GM12878 (cell line): ENCODE measurements at regions of chr4 and their contacts with region 1.

Region 1: DNA sequence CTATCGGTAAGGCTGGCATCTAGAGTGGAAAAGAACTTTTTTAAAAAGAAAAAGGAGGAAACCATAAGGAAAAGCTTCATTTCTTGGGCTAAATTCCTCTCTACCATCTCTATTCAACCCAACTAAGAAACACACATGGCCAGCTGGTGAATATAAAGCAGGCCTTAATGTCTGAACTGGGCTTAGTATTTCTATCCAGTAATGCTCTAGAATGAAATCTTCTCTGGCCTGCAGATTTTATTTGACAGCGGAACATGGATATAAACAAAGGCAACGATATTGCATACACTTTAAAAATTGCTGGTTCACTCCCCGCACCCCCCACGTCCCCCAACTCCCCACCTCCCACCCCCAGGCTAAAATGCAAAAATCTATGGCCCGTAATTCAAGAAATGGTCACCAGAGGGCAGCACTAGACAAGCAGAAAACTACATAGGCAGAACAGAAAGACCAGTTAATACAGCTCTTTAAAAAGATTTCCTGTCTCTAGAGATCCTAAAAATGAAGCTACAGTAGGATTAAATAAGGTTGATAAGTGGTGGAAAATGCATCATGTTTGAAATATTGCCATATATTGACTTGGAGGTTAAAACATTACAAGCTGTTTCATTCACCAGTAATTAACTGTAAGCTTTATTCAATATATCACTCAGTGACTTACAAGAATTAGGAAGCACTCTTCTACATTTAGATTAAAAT is 155.2 kb upstream of the GALNT7 start:
- DNase-seq: peak; percentile 9
- ATAC-seq: peak; percentile 84
- H3K4me3 ChIP-seq: no peak overlapping the region
- H3K27ac ChIP-seq: no peak overlapping the region
- H3K4me1 ChIP-seq: no peaks in the 10 kb centered on the region
- H3K27me3 ChIP-seq: no peaks in the 10 kb centered on the region
- CTCF ChIP-seq: peak; percentile 42 to 65 (median 64); a peak in 5 of 6 replicates
- EP300 ChIP-seq: no peak
- POLR2A ChIP-seq: no peak
- RAD21 ChIP-seq: peak; percentile 94

Region 2: DNA sequence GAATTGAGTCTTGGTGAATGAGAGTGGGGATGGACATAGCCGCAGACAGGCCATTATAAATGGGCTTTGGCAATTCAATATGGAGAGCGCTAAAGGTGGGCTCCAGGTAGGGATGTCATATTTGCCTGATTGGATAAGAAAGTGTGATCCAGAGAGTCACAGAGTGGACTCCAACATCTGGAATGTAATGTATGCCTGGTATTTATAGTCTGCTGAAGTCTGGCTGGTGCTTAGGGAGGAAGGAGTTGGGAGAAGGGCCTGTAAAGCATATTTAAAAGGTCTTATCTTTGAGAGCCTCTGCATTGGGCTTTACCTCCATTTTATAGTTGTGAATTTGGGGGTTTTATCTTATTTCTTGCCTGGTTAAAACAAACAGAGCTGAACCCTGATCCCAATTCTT is 1047.0 kb before region 1 on chr4:
- CTCF ChIA-PET with region 1: no interaction called
- POLR2A ChIA-PET with region 1: no interaction called
- RAD21 ChIA-PET with region 1: no interaction called
- SMC1A ChIA-PET with region 1: no interaction called
- in situ Hi-C with region 1: no loop called
- intact Hi-C with region 1: no loop called
- DNase-seq: no peak
- ATAC-seq: no peak
- H3K4me3 ChIP-seq: no peak overlapping the region
- H3K27ac ChIP-seq: no peak overlapping the region
- H3K4me1 ChIP-seq: no peaks in the 10 kb centered on the region
- H3K27me3 ChIP-seq: no peaks in the 10 kb centered on the region
- CTCF ChIP-seq: no peak
- EP300 ChIP-seq: no peak
- POLR2A ChIP-seq: no peak
- RAD21 ChIP-seq: no peak

Region 3: DNA sequence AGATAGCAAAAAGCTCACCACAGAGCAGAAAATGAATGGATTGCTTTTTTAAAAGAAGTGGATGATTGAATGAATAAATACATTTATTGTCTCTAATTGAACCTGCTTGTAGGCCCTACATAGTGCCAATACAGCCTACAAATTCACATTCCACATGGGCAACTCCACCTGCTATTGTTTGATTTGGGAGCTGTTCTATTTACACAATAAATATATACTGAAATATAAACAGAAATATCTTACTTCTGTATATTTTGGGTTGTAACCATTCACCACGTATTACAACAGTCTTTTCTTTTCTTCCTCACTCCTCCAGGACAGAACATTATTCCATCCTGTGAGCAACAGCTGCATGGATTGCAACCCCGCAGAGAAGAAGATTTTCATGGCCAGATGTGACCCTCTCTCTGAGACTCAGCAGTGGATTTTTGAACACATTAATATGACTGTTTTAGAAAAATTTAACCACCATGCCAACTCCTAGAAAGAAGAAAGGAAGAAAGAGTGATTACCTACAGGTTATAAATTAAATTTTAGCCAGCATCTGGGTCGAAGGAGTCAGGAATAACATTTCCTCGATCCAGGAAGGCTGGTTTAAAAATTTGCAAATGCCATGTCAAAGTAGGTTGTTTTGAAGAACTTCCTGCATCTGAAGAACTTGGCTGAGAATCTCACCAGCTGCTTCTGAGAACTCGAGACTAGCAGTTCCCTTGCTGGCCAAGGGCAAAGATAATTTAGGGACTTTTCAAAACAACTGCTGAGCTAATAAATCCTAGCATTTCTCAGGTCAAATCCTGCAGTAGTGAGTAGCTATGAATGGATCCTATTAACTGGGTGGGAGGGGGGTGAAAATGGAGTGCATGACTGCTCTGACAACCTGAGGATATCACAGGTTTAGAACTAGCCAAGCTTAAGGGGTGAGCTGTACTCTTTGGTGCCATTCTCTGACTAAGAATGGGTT is 26.5 kb after region 1 on chr4:
- CTCF ChIA-PET with region 1: interaction called, 18 read pairs
- POLR2A ChIA-PET with region 1: no interaction called
- RAD21 ChIA-PET with region 1: interaction called, 6 read pairs
- SMC1A ChIA-PET with region 1: interaction called, 3 read pairs
- in situ Hi-C with region 1: no loop called
- intact Hi-C with region 1: no loop called
- DNase-seq: no peak
- ATAC-seq: no peak
- H3K4me3 ChIP-seq: no peak overlapping the region
- H3K27ac ChIP-seq: no peak overlapping the region
- H3K4me1 ChIP-seq: no peaks in the 10 kb centered on the region
- H3K27me3 ChIP-seq: no peaks in the 10 kb centered on the region
- CTCF ChIP-seq: no peak
- EP300 ChIP-seq: no peak
- POLR2A ChIP-seq: no peak
- RAD21 ChIP-seq: no peak

Region 4: GRCh38 chr4:173252024-173252935 is 238.9 kb after region 1 on chr4:
- CTCF ChIA-PET with region 1: interaction called, 175 read pairs
- POLR2A ChIA-PET with region 1: interaction called, 3 read pairs
- RAD21 ChIA-PET with region 1: interaction called, 98 read pairs
- SMC1A ChIA-PET with region 1: interaction called, 96 read pairs
- in situ Hi-C with region 1: loop called (anchors 5 kb)
- intact Hi-C with region 1: loop called (anchors 1 kb)
- DNase-seq: peak; percentile 68
- ATAC-seq: peak; percentile 51
- H3K4me3 ChIP-seq: no peak overlapping the region
- H3K27ac ChIP-seq: peak overlapping the region; percentile 61
- H3K4me1 ChIP-seq: peaks cover 26% of the 10 kb centered on the region
- H3K27me3 ChIP-seq: no peaks in the 10 kb centered on the region
- CTCF ChIP-seq: no peak
- EP300 ChIP-seq: no peak; a peak in 1 of 4 replicates
- POLR2A ChIP-seq: no peak
- RAD21 ChIP-seq: peak; percentile 14; the same call in 1 of the 2 replicates

Region 5: DNA sequence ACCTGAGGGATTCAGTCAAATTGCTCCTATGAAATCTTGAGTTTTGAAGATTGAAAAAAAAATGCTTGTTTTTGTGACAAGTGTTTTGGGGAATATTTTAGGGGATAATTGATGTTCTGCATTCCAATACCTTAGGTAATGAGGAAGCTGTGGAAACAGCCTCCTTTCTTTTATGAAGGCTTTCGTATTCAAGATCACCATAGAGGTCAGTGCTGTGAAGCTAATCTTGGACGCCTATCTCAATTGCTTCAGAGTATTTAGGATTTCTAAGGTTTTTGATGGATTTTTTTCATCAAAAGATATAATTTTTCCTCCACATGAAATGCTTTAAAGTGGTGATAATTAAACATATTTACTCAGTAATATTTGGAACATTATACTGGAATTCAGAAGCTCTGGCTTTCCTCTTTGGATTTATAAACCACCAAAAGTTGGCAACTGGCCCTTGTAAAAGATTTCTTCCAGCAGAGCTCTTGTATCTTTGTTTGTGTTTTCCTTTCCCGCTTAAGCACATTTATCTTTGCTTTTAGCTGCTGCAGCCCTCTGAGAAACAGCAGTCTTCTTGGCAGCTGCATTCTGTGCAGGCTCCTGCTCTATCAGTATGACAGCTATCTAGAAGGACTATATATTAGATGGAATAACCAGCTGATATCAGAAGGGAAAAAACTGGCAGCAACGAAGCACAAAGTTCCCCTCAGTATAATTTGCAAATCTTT is 257.1 kb after region 1 on chr4:
- CTCF ChIA-PET with region 1: interaction called, 14 read pairs
- POLR2A ChIA-PET with region 1: no interaction called
- RAD21 ChIA-PET with region 1: interaction called, 7 read pairs
- SMC1A ChIA-PET with region 1: interaction called, 10 read pairs
- in situ Hi-C with region 1: no loop called
- intact Hi-C with region 1: no loop called
- DNase-seq: no peak
- ATAC-seq: no peak
- H3K4me3 ChIP-seq: no peak overlapping the region
- H3K27ac ChIP-seq: no peak overlapping the region
- H3K4me1 ChIP-seq: no peaks in the 10 kb centered on the region
- H3K27me3 ChIP-seq: no peaks in the 10 kb centered on the region
- CTCF ChIP-seq: no peak
- EP300 ChIP-seq: no peak
- POLR2A ChIP-seq: no peak
- RAD21 ChIP-seq: no peak

Region 6: DNA sequence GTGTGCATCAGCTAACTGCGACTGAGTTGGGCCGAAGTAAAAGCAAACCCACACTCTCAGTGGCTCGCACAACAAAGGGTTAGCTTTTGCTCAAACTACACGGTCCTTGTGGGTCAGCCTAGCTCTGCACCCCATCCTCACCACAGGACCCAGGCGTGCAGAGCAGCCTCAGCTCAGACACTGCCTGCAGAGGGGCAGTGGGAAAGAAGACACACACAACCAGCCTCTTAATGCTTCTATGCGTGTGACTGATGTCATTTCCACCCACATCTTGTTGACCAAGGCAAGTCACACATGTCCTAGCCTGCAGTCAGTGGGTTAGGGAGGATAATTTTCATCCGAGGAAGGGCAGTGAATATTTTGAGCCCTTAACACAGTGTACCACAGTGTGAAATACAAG is 280.3 kb after region 1 on chr4:
- CTCF ChIA-PET with region 1: interaction called, 150 read pairs
- POLR2A ChIA-PET with region 1: no interaction called
- RAD21 ChIA-PET with region 1: interaction called, 8 read pairs
- SMC1A ChIA-PET with region 1: interaction called, 99 read pairs
- in situ Hi-C with region 1: no loop called
- intact Hi-C with region 1: no loop called
- DNase-seq: no peak
- ATAC-seq: no peak; the same call in 2 of the 3 replicates
- H3K4me3 ChIP-seq: no peak overlapping the region
- H3K27ac ChIP-seq: no peak overlapping the region
- H3K4me1 ChIP-seq: peaks cover 3% of the 10 kb centered on the region; the same call in 1 of the 2 replicates
- H3K27me3 ChIP-seq: no peaks in the 10 kb centered on the region
- CTCF ChIP-seq: no peak
- EP300 ChIP-seq: no peak
- POLR2A ChIP-seq: no peak
- RAD21 ChIP-seq: no peak

Region 7: DNA sequence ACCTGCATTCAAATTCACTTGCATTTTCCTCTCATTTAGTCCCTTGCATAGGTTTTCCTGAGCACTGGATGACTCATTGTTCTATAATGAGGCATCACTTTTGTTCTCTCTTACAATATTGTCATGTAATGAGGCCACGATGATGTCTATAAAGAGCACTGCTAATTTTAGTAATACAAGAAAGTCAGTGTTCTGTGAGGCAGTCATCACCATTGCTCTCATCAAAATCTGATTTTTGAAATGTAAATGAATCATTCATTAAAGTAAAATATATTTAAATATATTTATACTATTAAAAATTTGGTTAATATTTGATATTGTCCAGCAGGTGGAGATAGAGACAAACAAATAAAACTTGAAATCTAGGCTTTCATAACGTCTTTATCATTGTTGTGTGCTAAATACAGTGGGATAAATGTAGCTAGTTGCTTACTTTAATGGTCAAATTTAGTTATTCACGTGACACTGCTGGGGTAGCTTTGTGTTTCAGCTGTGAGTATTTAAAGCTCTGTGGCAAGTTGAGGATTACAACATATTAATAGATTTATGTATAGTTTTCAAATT is 305.3 kb after region 1 on chr4:
- CTCF ChIA-PET with region 1: interaction called, 15 read pairs
- POLR2A ChIA-PET with region 1: no interaction called
- RAD21 ChIA-PET with region 1: interaction called, 4 read pairs
- SMC1A ChIA-PET with region 1: interaction called, 12 read pairs
- in situ Hi-C with region 1: no loop called
- intact Hi-C with region 1: no loop called
- DNase-seq: no peak
- ATAC-seq: peak; percentile 51; the same call in 2 of the 3 replicates
- H3K4me3 ChIP-seq: no peak overlapping the region
- H3K27ac ChIP-seq: no peak overlapping the region
- H3K4me1 ChIP-seq: no peaks in the 10 kb centered on the region; the same call in 1 of the 2 replicates
- H3K27me3 ChIP-seq: no peaks in the 10 kb centered on the region
- CTCF ChIP-seq: peak in 1 of 3 experiments; percentile 14; a peak in 3 of 6 replicates
- EP300 ChIP-seq: no peak
- POLR2A ChIP-seq: no peak
- RAD21 ChIP-seq: peak; percentile 45

Region 8: DNA sequence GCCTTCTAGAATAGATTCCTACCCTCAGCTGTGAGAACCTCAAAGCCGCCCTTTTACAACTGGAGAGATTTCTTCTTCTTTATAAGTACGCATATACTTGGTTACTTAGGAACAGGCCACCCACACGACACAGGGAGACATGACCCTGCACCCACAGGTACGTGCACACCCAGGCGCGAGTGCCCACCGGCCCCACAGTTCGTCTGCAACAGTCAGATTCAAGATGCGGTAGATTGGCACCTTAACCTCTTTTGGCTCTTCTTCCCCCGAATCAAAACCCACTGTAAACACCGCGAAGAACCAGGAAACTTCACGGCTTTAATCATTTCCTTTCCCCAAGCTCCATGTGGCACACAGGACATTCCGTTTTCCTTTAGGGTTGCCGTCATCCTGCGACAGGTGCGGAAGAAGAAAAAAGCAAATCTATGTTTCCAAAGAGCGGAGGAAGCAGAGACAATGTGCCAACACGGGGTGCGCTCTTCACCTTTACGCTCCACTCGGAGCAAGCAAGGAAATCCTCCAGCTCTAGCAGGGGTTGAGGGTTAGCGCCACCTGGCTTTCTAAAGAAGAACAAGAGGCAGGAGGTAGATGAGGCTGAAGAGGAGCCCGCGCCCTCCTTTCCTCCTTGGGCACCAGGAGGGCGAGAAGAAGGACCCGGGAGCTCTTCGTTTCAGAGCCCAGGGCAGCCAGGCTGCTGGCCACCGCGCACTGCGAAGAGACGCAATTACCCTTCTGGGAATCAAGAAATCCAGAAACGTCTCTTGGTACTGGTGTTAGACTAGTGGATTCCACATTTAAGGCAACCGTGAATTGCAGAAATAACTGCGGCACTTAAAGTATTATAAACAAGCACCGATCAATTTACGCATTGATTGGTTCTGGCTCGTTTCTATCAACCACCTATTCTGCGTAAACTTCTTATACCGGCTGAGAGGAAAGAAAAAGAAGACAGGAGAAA is 480.9 kb after region 1 on chr4:
- CTCF ChIA-PET with region 1: interaction called, 8 read pairs
- POLR2A ChIA-PET with region 1: no interaction called
- RAD21 ChIA-PET with region 1: no interaction called
- SMC1A ChIA-PET with region 1: no interaction called
- in situ Hi-C with region 1: no loop called
- intact Hi-C with region 1: loop called (anchors 2 kb)
- DNase-seq: peak; percentile 27
- ATAC-seq: peak; percentile 99
- H3K4me3 ChIP-seq: peak overlapping the region; percentile 70; the same call in 1 of the 2 replicates
- H3K27ac ChIP-seq: no peak overlapping the region
- H3K4me1 ChIP-seq: peaks cover 4% of the 10 kb centered on the region
- H3K27me3 ChIP-seq: no peaks in the 10 kb centered on the region
- CTCF ChIP-seq: peak; percentile 78 to 91 (median 82)
- EP300 ChIP-seq: no peak
- POLR2A ChIP-seq: no peak
- RAD21 ChIP-seq: peak; percentile 83

Region 9: GRCh38 chr4:173529477-173530325 is 516.3 kb after region 1 on chr4 and contains the start of gene HAND2:
- CTCF ChIA-PET with region 1: no interaction called
- POLR2A ChIA-PET with region 1: no interaction called
- RAD21 ChIA-PET with region 1: no interaction called
- SMC1A ChIA-PET with region 1: no interaction called
- in situ Hi-C with region 1: no loop called
- intact Hi-C with region 1: no loop called
- DNase-seq: no peak
- ATAC-seq: no peak
- H3K4me3 ChIP-seq: no peak within 1 kb of the TSS
- H3K27ac ChIP-seq: no peak within 1 kb of the TSS
- H3K4me1 ChIP-seq: no peaks in the 10 kb centered on the region
- H3K27me3 ChIP-seq: peaks cover 7 to 39% of the 10 kb centered on the region in 2 experiments
- CTCF ChIP-seq: no peak
- EP300 ChIP-seq: no peak
- POLR2A ChIP-seq: no peak
- RAD21 ChIP-seq: no peak
- polyA plus RNA-seq, gene HAND2: not detected